CD4-positive, alpha-beta memory T cell (primary cell): ENCODE measurements at regions of chr9 and their contacts with region 1.

Region 1: DNA sequence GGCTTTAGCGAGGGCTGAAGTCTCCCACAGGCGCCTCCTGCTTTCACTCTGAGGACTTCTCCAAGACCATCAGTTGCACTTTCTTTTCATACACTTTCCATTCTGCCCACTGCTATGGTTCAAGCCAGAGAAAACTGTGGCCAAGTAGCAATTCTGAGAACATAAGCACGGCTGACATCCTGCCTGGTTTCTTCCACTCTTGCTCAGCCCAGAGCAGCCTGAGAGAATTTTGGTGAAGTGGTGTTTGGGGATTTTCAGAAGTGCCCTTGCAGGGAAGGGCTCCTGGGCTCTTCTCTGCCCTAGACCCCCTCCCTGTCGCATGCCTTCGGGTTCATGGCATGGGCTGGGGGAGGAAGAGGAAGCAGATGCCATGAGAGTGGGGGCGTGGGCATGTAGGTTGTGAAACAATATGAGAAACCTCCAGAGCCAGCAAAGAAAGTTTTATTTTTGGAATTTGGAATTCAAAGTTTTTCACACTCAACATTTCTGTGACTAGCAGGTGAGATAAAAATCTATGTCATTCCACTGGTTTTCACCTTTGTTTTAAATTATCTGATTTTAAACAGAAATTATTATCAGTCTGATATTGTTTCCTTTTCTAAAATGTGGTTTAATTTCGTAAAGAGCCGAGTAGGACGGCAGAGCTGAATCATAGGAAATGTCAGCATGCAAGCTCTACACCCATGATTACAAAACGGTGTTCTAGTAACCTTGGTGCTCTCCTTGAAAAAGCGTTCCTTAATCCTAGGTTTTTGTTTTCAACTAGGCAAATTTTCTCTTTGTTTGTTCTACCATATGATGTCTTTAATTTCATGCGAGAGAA is 27.8 kb upstream of the TNFSF8 start:
- DNase-seq: peak in 3 of 5 donors; percentile 9 to 39 (median 10)
- H3K4me3 ChIP-seq: peak overlapping the region in 1 of 2 donors; percentile 23
- H3K4me3 Mint-ChIP-seq: peak overlapping the region; percentile 67 to 89 (median 86)
- H3K27ac ChIP-seq: peak overlapping the region; percentile 8
- H3K27ac Mint-ChIP-seq: peak overlapping the region; percentile 83 to 94 (median 88)
- H3K4me1 ChIP-seq: peaks cover 20% of the 10 kb centered on the region
- H3K4me1 Mint-ChIP-seq: peaks cover 16 to 33% (median 30%) of the 10 kb centered on the region in 4 donors
- H3K27me3 ChIP-seq: no peaks in the 10 kb centered on the region
- H3K27me3 Mint-ChIP-seq: no peaks in the 10 kb centered on the region

Region 2: GRCh38 chr9:114938687-114939575 is 19.3 kb before region 1 on chr9:
- CTCF ChIA-PET with region 1: interaction called, 3 read pairs
- POLR2A ChIA-PET with region 1: no interaction called
- intact Hi-C with region 1: loop called (anchors 2 kb)
- DNase-seq: peak in 1 of 5 donors; percentile 24
- H3K4me3 ChIP-seq: no peak overlapping the region
- H3K4me3 Mint-ChIP-seq: peak overlapping the region in 7 of 8 donors; percentile 19 to 74 (median 56)
- H3K27ac ChIP-seq: no peak overlapping the region
- H3K27ac Mint-ChIP-seq: peak overlapping the region; percentile 11 to 89 (median 67)
- H3K4me1 ChIP-seq: peaks cover 21% of the 10 kb centered on the region
- H3K4me1 Mint-ChIP-seq: peaks cover 19 to 33% (median 27%) of the 10 kb centered on the region in 4 donors
- H3K27me3 ChIP-seq: no peaks in the 10 kb centered on the region
- H3K27me3 Mint-ChIP-seq: no peaks in the 10 kb centered on the region

Region 3: GRCh38 chr9:114969269-114969668 is 11.0 kb after region 1 on chr9:
- CTCF ChIA-PET with region 1: interaction called, 11 read pairs
- POLR2A ChIA-PET with region 1: no interaction called
- intact Hi-C with region 1: no loop called
- DNase-seq: no peak
- H3K4me3 ChIP-seq: no peak overlapping the region
- H3K4me3 Mint-ChIP-seq: no peak overlapping the region
- H3K27ac ChIP-seq: no peak overlapping the region
- H3K27ac Mint-ChIP-seq: no peak overlapping the region
- H3K4me1 ChIP-seq: peaks cover 16% of the 10 kb centered on the region
- H3K4me1 Mint-ChIP-seq: peaks cover 10 to 23% (median 18%) of the 10 kb centered on the region in 4 donors
- H3K27me3 ChIP-seq: no peaks in the 10 kb centered on the region
- H3K27me3 Mint-ChIP-seq: no peaks in the 10 kb centered on the region

Region 4: GRCh38 chr9:114988962-114989599 is 30.8 kb after region 1 on chr9:
- CTCF ChIA-PET with region 1: no interaction called
- POLR2A ChIA-PET with region 1: no interaction called
- intact Hi-C with region 1: loop called (anchors 5 kb)
- DNase-seq: peak in 1 of 5 donors; percentile 44
- H3K4me3 ChIP-seq: no peak overlapping the region
- H3K4me3 Mint-ChIP-seq: peak overlapping the region in 7 of 8 donors; percentile 1 to 77 (median 57)
- H3K27ac ChIP-seq: peak overlapping the region; percentile 27
- H3K27ac Mint-ChIP-seq: peak overlapping the region; percentile 82 to 96 (median 88)
- H3K4me1 ChIP-seq: peaks cover 24% of the 10 kb centered on the region
- H3K4me1 Mint-ChIP-seq: peaks cover 21 to 46% (median 32%) of the 10 kb centered on the region in 4 donors
- H3K27me3 ChIP-seq: no peaks in the 10 kb centered on the region
- H3K27me3 Mint-ChIP-seq: no peaks in the 10 kb centered on the region

Region 5: DNA sequence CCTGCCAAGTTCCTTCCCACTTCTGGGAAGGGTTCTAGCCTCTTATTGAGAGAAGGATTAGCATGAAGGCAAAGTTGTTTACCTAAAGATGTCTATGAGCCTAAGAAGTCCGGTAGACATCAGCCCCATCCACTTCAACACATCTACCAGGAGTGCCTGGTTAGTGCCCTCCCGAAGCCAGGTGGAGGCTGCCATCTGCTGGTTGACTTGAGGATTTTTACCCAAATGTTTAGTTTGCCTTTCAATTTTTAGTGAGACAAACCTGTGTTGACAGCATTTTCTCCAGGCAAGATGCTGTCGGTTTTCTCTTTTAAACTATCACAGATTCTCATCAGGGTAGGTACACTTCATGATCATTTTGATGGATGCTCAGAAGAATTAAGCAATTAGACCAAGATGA is 55.8 kb after region 1 on chr9:
- CTCF ChIA-PET with region 1: no interaction called
- POLR2A ChIA-PET with region 1: no interaction called
- intact Hi-C with region 1: no loop called
- DNase-seq: peak; percentile 78 to 79 (median 79)
- H3K4me3 ChIP-seq: no peak overlapping the region
- H3K4me3 Mint-ChIP-seq: no peak overlapping the region
- H3K27ac ChIP-seq: no peak overlapping the region
- H3K27ac Mint-ChIP-seq: peak overlapping the region in 1 of 7 donors; percentile 69
- H3K4me1 ChIP-seq: peaks cover 12% of the 10 kb centered on the region
- H3K4me1 Mint-ChIP-seq: peaks cover 19 to 21% (median 20%) of the 10 kb centered on the region in 4 donors
- H3K27me3 ChIP-seq: no peaks in the 10 kb centered on the region
- H3K27me3 Mint-ChIP-seq: peaks cover 0 to 1% of the 10 kb centered on the region in 2 donors